ENCODE measurements at regions of chr14 and their contacts with region 1.

Region 1: GRCh38 chr14:50778721-50779483 is 52.1 kb downstream of the NIN start:
- DNase-seq: no peak
- H3K4me3 Mint-ChIP-seq: no peak overlapping the region
- H3K27ac Mint-ChIP-seq: no peak overlapping the region
- H3K4me1 Mint-ChIP-seq: peaks cover 26% of the 10 kb centered on the region
- H3K27me3 Mint-ChIP-seq: no peaks in the 10 kb centered on the region

Region 2: DNA sequence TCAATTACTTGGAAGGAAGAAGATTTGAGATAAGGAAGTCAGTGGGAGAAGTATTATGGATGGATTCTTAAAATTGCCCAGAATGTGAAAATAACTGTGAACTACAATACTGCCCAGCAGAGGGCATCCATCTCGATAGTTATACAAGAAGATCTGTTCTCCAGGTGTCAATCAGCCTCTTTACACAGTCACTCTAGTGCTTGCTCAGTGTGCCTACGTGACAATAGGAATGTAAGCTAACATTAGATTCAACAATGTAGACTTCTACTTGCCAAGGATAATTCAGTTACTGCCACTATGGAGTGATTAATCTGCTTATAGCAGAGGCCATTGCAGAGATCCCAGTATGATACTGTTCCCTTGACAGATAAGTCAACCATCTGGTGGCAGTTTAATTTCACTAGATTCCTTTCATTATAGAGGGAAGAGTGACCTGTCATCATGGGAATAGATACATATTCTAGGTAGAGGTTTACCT is 235.9 kb before region 1 on chr14:
- CTCF ChIA-PET with region 1: interaction called, 165 read pairs
- POLR2A ChIA-PET with region 1: no interaction called
- intact Hi-C with region 1: loop called (anchors 1 kb)
- DNase-seq: peak; percentile 20
- H3K4me3 Mint-ChIP-seq: no peak overlapping the region
- H3K27ac Mint-ChIP-seq: no peak overlapping the region
- H3K4me1 Mint-ChIP-seq: peaks cover 9% of the 10 kb centered on the region
- H3K27me3 Mint-ChIP-seq: no peaks in the 10 kb centered on the region

Region 3: GRCh38 chr14:50619556-50620141 is 159.3 kb before region 1 on chr14:
- CTCF ChIA-PET with region 1: interaction called, 46 read pairs
- POLR2A ChIA-PET with region 1: no interaction called
- intact Hi-C with region 1: loop called (anchors 1 kb)
- DNase-seq: no peak
- H3K4me3 Mint-ChIP-seq: no peak overlapping the region
- H3K27ac Mint-ChIP-seq: no peak overlapping the region
- H3K4me1 Mint-ChIP-seq: peaks cover 3% of the 10 kb centered on the region
- H3K27me3 Mint-ChIP-seq: no peaks in the 10 kb centered on the region

Region 4: GRCh38 chr14:50667996-50668825 is 110.7 kb before region 1 on chr14 and contains the start of gene SAV1:
- CTCF ChIA-PET with region 1: interaction called, 10 read pairs
- POLR2A ChIA-PET with region 1: interaction called, 10 read pairs
- intact Hi-C with region 1: loop called (anchors 5 kb)
- DNase-seq: peak; percentile 67
- H3K4me3 Mint-ChIP-seq: no peak within 1 kb of the TSS
- H3K27ac Mint-ChIP-seq: peak within 1 kb of the TSS; percentile 63
- H3K4me1 Mint-ChIP-seq: peaks cover 18% of the 10 kb centered on the region
- H3K27me3 Mint-ChIP-seq: no peaks in the 10 kb centered on the region
- total RNA-seq, gene SAV1: 13.4 to 13.5 TPM

Region 5: GRCh38 chr14:50714450-50715073 is 64.3 kb before region 1 on chr14:
- CTCF ChIA-PET with region 1: interaction called, 12 read pairs
- POLR2A ChIA-PET with region 1: no interaction called
- intact Hi-C with region 1: no loop called
- DNase-seq: no peak
- H3K4me3 Mint-ChIP-seq: no peak overlapping the region
- H3K27ac Mint-ChIP-seq: no peak overlapping the region
- H3K4me1 Mint-ChIP-seq: no peaks in the 10 kb centered on the region
- H3K27me3 Mint-ChIP-seq: no peaks in the 10 kb centered on the region